GM18951 (cell line): ENCODE measurements at regions of chr19 and their contacts with region 1.

Region 1: DNA sequence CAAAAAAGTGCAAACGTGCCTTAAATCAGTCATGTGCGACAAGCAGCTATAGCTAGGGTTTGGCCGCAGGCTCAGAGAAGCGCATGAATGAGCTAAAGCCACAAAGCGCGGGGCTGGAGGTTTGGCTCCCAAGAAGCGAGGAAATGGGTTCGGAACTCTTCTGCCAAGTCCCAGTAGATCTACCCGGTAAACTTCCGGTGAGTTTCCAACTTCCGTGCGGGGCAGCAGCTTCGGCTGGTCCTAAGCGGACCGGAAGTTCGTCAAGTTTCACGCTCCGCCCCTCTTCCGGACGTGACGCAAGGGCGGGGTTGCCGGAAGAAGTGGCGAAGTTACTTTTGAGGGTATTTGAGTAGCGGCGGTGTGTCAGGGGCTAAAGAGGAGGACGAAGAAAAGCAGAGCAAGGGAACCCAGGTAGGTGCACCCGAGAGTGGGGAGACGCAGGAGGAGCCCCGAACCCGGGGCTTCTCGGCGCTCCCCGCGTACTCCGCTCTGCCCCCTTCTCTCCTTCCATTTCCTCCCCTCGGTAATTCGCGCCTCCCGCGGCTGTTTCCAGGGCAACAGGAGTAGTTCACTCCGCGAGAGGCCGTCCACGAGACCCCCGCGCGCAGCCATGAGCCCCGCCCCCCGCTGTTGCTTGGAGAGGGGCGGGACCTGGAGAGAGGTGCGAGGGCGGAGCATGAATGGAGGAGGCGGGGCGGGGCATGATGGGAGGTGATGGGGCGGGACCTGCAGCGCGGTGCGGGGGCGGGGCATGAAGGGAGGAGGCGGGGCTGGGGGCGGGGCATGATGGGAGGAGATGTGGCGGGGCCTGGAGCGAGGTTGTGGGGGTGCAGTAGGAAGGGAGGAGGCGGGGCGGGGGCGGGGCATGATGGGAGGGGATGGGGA is at the start of gene NR1H2:
- POLR2A ChIP-seq: peak; percentile 63

Region 2: DNA sequence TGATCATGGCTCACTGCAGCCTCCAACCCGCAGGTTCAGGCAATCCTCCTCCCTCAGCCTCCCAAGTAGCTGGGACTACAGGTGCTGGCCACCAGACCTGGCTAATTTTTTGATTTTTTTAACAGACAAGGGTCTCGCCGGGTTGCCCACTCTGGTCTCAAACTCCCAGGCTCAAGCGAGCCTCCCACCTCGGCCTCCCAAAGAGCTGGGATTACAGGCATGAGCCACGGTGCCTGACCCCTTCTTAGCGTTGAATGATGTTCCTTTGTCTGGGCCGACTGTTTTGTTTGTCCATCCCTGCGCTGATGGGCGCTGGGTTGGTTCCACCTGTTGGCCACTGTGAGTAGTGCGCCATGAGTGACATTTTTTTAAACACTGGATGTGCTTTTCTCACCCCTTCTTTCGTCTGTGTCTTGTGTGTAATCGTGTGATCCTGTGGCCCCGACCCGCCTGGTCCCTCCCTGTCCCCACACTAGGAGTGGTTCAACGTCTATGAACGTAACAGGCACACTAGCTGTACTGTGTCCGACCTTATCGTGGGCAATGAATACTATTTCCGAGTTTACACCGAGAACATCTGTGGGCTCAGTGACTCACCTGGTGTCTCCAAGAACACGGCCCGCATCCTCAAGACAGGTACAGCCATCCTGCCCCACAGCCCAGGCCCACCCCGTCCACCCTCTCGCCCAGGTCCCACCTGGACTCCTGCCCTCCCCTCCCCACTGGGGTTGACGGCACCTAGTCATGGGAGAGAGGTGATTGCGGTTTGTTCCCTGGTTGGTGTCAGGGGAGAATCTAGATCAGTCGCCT is 84.9 kb after region 1 on chr19:
- in situ Hi-C with region 1: loop called (anchors 10 kb)
- POLR2A ChIP-seq: no peak